Astrocyte of the cerebellum (primary cell): ENCODE measurements at regions of chr16 and their contacts with region 1.

Region 1: GRCh38 chr16:48354877-48355855 is 30.0 kb downstream of the SIAH1 start:
- DNase-seq: no peak
- H3K4me3 ChIP-seq: no peak overlapping the region
- CTCF ChIP-seq: no peak

Region 2: GRCh38 chr16:48623304-48624016 is 268.3 kb after region 1 on chr16:
- in situ Hi-C with region 1: loop called (anchors 5 kb)
- DNase-seq: peak; percentile 31
- H3K4me3 ChIP-seq: peak overlapping the region; percentile 39
- CTCF ChIP-seq: peak; percentile 99